Endothelial cell of umbilical vein (primary cell): ENCODE measurements at regions of chr4 and their contacts with region 1.

Region 1: GRCh38 chr4:47814618-47815295 is 23.1 kb downstream of the CORIN start:
- DNase-seq: no peak
- H3K4me3 ChIP-seq: no peak overlapping the region
- H3K27ac ChIP-seq: no peak overlapping the region
- H3K4me1 ChIP-seq: peaks cover 6% of the 10 kb centered on the region
- H3K27me3 ChIP-seq: peaks cover 9 to 12% of the 10 kb centered on the region in 2 experiments
- CTCF ChIP-seq: no peak
- POLR2A ChIP-seq: no peak

Region 2: DNA sequence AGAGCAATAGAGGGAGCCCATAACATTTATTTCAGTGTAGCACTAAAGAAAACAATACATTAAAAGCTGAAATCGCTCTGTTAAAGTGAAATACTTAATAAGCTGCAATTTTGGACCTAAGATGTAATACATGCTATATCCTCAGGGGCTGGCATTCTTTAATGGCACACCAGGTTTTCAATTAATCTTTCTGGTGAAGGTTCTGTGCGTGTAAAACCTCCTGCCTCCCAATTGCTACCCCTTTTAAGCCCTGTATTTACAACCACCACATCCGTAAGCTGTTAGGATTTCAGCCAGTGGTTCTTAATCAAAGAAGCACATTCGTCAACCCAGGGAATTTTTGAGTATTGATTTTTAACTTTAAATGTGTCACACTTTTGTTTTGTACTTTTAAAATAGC is 343.7 kb before region 1 on chr4:
- CTCF ChIA-PET with region 1: no interaction called
- POLR2A ChIA-PET with region 1: no interaction called
- dilution Hi-C with region 1: no loop called
- intact Hi-C with region 1: no loop called
- DNase-seq: no peak
- H3K4me3 ChIP-seq: no peak overlapping the region
- H3K27ac ChIP-seq: no peak overlapping the region
- H3K4me1 ChIP-seq: no peaks in the 10 kb centered on the region
- H3K27me3 ChIP-seq: no peaks in the 10 kb centered on the region
- CTCF ChIP-seq: no peak
- POLR2A ChIP-seq: no peak

Region 3: DNA sequence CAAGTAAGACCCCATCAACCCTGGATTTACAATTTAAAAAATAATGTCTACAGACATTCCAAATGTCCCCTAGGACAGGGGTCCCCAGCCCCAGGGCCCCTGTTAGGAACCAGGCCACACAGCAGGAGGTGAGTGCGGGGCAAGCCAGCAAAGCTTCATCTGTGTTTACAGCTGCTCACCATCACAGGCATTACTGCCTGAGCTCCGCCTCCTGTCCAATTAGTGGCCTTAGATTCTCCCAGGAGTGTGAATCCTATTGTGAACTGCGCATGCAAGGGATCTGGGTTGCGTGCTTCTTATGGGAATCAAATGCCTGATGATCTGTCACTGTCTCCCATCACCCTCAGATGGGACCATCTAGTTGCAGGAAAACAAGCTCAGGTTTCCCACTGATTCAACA is 183.6 kb before region 1 on chr4:
- CTCF ChIA-PET with region 1: no interaction called
- POLR2A ChIA-PET with region 1: no interaction called
- dilution Hi-C with region 1: no loop called
- intact Hi-C with region 1: no loop called
- DNase-seq: no peak
- H3K4me3 ChIP-seq: no peak overlapping the region
- H3K27ac ChIP-seq: no peak overlapping the region
- H3K4me1 ChIP-seq: no peaks in the 10 kb centered on the region
- H3K27me3 ChIP-seq: no peaks in the 10 kb centered on the region
- CTCF ChIP-seq: no peak
- POLR2A ChIP-seq: no peak

Region 4: DNA sequence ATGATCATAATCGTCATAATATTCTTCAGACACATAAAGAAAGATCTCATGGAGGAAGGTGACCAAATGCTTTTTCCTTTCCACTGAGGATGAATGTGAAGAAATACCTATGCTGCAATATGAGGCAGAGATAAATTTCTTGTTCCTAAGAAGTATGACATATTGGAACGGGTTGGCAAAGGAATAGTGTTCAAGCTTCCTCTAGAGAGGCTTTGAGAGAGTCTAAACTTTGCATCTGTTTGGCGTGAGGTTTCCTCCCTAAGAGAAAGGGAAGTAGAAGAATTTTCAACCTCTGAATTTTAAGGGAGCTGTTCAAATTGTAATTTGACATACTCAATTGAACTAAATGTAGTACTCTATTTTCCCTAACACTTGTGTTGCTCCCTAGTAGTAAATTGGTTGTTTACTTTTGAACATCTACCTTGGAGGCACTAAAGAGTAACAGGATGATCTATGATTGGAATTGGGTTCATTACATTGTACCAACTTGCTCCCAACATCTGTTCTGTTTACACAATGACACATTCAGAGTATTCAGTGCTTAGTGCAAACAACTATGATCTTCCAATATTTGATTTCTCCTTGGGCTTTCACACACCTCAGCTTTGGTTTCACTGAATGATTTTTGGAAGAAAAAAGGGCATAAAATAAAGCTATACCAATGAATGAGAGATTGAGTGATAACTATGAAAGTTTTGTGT is 98.9 kb before region 1 on chr4:
- CTCF ChIA-PET with region 1: no interaction called
- POLR2A ChIA-PET with region 1: no interaction called
- dilution Hi-C with region 1: no loop called
- intact Hi-C with region 1: loop called (anchors 5 kb)
- DNase-seq: no peak
- H3K4me3 ChIP-seq: no peak overlapping the region
- H3K27ac ChIP-seq: no peak overlapping the region
- H3K4me1 ChIP-seq: no peaks in the 10 kb centered on the region
- H3K27me3 ChIP-seq: peaks cover 17 to 20% of the 10 kb centered on the region in 2 experiments
- CTCF ChIP-seq: no peak
- POLR2A ChIP-seq: no peak

Region 5: DNA sequence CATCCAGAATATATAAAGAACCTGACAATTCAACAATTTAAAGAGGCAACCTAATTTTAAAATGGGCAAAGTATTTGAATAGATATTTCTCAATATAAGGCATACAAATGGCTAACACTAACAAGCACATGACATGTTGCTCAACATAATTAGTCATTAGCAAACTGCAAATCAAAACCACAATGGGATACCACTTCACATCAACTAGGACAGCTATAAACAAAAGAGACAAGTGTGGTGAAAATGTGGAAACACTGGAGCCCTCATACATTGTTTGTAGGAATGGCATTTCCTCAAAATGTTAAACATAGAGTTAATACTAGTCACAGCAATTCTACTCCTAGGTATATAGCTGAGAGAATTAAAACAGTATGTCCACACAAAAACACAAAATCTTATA is 73.6 kb before region 1 on chr4:
- CTCF ChIA-PET with region 1: no interaction called
- POLR2A ChIA-PET with region 1: no interaction called
- dilution Hi-C with region 1: no loop called
- intact Hi-C with region 1: loop called (anchors 10 kb)
- DNase-seq: no peak
- H3K4me3 ChIP-seq: no peak overlapping the region
- H3K27ac ChIP-seq: no peak overlapping the region
- H3K4me1 ChIP-seq: no peaks in the 10 kb centered on the region
- H3K27me3 ChIP-seq: peaks cover 0 to 5% of the 10 kb centered on the region in 2 experiments
- CTCF ChIP-seq: no peak
- POLR2A ChIP-seq: no peak

Region 6: DNA sequence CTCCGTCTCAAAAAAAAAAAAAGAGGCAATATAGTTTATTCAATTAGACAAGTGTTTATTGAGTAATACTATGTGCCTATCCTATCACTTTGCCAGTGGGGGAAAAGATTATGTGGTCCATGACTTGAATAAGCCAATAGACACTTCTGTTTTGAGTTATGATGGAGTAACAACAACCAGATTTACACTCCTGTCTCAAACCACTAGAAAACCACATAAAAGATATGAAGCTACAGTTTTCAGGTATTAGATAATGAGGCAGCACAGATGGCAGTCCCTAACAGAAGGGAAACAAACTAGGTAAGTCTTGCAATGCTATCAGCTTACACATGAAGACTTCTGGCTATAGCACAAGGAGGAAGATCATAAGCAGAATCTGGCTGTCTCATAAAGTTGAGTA is 77.2 kb after region 1 on chr4:
- CTCF ChIA-PET with region 1: no interaction called
- POLR2A ChIA-PET with region 1: no interaction called
- dilution Hi-C with region 1: no loop called
- intact Hi-C with region 1: no loop called
- DNase-seq: no peak
- H3K4me3 ChIP-seq: no peak overlapping the region
- H3K27ac ChIP-seq: no peak overlapping the region
- H3K4me1 ChIP-seq: no peaks in the 10 kb centered on the region
- H3K27me3 ChIP-seq: no peaks in the 10 kb centered on the region
- CTCF ChIP-seq: no peak
- POLR2A ChIP-seq: no peak